CD8-positive, alpha-beta T cell (primary cell): ENCODE measurements at regions of chr4 and their contacts with region 1.

Region 1: DNA sequence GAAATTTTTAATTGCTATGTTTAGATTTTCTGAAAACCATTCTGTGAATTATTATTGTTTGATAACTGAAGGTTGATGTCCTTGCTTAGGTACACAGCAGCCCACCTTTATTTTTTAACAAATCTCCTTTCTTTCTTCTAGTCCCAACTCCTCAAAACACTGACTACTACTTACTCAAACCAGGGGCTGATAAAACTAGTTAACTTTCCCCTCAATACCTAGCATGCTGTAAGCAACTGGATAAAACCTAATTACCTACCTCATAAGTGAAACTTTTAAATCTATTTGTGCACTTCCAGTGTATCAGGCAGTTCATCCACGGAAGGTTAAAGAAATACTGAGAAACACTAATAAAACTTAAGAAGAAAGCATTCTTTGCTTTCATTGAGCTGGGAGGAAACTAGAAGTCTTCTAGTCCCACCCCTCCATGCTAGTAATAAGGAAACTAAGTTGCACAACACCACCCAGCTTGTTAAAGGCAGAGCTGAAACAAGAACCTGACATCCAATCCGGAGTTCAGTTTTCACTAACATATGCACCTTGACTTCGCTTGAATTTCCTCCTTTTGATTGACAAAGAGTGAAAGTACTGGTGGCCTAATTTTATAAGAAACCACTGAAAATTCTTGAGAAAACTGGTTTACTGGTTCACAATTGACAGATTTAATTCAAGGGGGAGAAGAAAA is 180.2 kb upstream of the TET2 start:
- DNase-seq: peak in 2 of 9 experiments; percentile 42 to 64
- ATAC-seq: peak; percentile 95
- H3K4me3 ChIP-seq: no peak overlapping the region
- H3K4me3 Mint-ChIP-seq: peak overlapping the region; percentile 65
- H3K27ac ChIP-seq: peak overlapping the region in 1 of 2 experiments; percentile 28
- H3K27ac Mint-ChIP-seq: peak overlapping the region; percentile 86
- H3K4me1 ChIP-seq: peaks cover 7% of the 10 kb centered on the region
- H3K4me1 Mint-ChIP-seq: peaks cover 12% of the 10 kb centered on the region
- H3K27me3 ChIP-seq: no peaks in the 10 kb centered on the region
- H3K27me3 Mint-ChIP-seq: no peaks in the 10 kb centered on the region
- CTCF ChIP-seq: no peak

Region 2: DNA sequence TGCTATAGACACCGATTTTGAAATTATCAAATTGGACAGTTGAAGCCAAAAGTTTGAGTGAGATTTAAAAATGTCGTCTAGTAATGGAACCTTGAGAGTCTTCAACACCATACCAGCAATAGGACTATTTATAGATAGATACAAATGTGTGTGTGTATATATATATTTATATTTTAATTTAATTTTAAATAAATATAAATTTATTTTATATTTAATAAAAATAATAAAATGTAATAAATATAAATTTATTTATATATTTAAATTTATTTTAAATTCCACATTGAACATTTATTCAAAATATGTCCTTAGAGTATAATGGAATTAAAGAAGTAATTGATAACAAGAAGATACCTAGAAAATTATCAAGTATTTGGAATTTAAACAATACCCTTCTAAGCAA is 249.9 kb before region 1 on chr4:
- CTCF ChIA-PET with region 1: no interaction called
- POLR2A ChIA-PET with region 1: no interaction called
- intact Hi-C with region 1: no loop called
- DNase-seq: no peak
- ATAC-seq: no peak
- H3K4me3 ChIP-seq: no peak overlapping the region
- H3K4me3 Mint-ChIP-seq: no peak overlapping the region
- H3K27ac ChIP-seq: no peak overlapping the region
- H3K27ac Mint-ChIP-seq: no peak overlapping the region
- H3K4me1 ChIP-seq: no peaks in the 10 kb centered on the region
- H3K4me1 Mint-ChIP-seq: no peaks in the 10 kb centered on the region
- H3K27me3 ChIP-seq: no peaks in the 10 kb centered on the region
- H3K27me3 Mint-ChIP-seq: peaks cover 5% of the 10 kb centered on the region
- CTCF ChIP-seq: no peak

Region 3: DNA sequence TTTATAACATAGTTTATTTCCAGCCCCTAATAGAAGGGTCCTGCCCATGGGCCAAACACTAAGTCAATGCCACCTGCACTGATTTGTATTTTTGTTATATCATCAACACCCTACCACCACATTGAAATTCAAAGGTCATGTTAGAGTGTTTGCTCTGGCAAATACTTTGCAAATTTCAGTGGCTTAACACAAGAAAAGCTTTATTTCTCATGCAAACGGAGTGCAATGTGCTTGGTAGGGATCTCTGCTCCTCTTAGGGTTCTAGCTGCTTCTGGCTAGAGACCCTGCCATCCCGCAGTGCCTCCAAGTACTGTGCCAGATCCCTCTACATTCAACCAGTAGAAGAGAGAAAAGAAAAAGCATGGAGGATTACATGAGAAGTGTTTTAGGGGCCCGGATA is 50.6 kb before region 1 on chr4:
- CTCF ChIA-PET with region 1: no interaction called
- POLR2A ChIA-PET with region 1: no interaction called
- intact Hi-C with region 1: loop called in 1 of 2 experiments (anchors 5 kb)
- DNase-seq: no peak
- ATAC-seq: no peak
- H3K4me3 ChIP-seq: no peak overlapping the region
- H3K4me3 Mint-ChIP-seq: no peak overlapping the region
- H3K27ac ChIP-seq: no peak overlapping the region
- H3K27ac Mint-ChIP-seq: no peak overlapping the region
- H3K4me1 ChIP-seq: peaks cover 7% of the 10 kb centered on the region
- H3K4me1 Mint-ChIP-seq: peaks cover 11% of the 10 kb centered on the region
- H3K27me3 ChIP-seq: no peaks in the 10 kb centered on the region
- H3K27me3 Mint-ChIP-seq: no peaks in the 10 kb centered on the region
- CTCF ChIP-seq: no peak

Region 4: DNA sequence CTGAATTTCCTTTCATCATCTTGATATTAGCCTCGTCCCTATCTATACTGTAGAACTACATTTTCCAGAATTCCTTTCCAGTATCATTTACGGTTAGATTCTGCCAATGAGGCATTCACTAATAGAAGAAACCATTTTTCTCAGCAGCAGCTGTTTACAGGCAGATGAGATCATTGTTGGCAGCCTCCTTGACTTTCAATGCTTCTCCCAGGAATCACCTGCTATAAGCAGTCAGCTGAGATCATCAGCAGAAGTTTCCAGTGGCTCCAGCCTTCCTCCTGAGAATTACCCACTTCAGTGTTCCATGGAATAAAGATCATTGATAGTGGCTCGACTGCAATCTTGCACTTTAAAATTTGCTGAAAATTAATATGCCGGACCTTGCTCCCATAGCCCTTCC is 22.9 kb after region 1 on chr4:
- CTCF ChIA-PET with region 1: no interaction called
- POLR2A ChIA-PET with region 1: no interaction called
- intact Hi-C with region 1: no loop called
- DNase-seq: no peak
- ATAC-seq: no peak
- H3K4me3 ChIP-seq: no peak overlapping the region
- H3K4me3 Mint-ChIP-seq: no peak overlapping the region
- H3K27ac ChIP-seq: no peak overlapping the region
- H3K27ac Mint-ChIP-seq: no peak overlapping the region
- H3K4me1 ChIP-seq: no peaks in the 10 kb centered on the region
- H3K4me1 Mint-ChIP-seq: no peaks in the 10 kb centered on the region
- H3K27me3 ChIP-seq: no peaks in the 10 kb centered on the region
- H3K27me3 Mint-ChIP-seq: no peaks in the 10 kb centered on the region
- CTCF ChIP-seq: no peak